ENCODE measurements at regions of chr17 and their contacts with region 1.

Region 1: GRCh38 chr17:13520899-13521572 is 80.7 kb downstream of the HS3ST3A1 start:
- H3K4me3 Mint-ChIP-seq: no peak overlapping the region
- H3K27ac Mint-ChIP-seq: no peak overlapping the region
- H3K4me1 Mint-ChIP-seq: no peaks in the 10 kb centered on the region
- H3K27me3 Mint-ChIP-seq: no peaks in the 10 kb centered on the region

Region 2: GRCh38 chr17:13477180-13477611 is 43.8 kb before region 1 on chr17:
- intact Hi-C with region 1: loop called (anchors 10 kb)
- H3K4me3 Mint-ChIP-seq: no peak overlapping the region
- H3K27ac Mint-ChIP-seq: no peak overlapping the region
- H3K4me1 Mint-ChIP-seq: no peaks in the 10 kb centered on the region
- H3K27me3 Mint-ChIP-seq: no peaks in the 10 kb centered on the region

Measured in dendritic cell treated with granulocyte-macrophage colony-stimulating factor and Interleukin-4, amounts not matched to agents 40 ng/mL and 50 ng/mL, for 4 days (primary cell).